Sigmoid colon (tissue), 7 donors: ENCODE measurements at regions of chr10 and their contacts with region 1.

Region 1: DNA sequence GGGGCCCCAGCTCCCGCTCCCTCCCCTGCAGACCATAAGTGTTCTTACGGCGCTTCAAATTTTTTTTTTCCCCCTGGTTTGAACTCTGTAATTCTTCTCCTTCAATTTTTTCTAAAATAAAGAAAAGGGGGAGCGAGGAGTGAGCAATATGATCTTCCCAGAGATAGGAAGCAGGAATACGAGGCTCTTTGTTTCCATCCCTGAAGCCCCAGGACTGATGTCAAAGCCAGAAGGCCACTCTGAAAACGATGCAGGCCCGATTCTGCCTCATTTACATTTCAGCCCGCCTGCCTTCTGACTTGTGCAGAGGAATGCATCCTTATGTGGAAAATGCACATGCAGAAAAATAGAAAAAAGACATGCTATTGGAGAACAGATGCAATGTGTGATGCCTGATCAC is 401.5 kb upstream of the MKI67 start:
- DNase-seq: no peak
- H3K4me3 ChIP-seq: no peak overlapping the region
- H3K27ac ChIP-seq: no peak overlapping the region
- H3K4me1 ChIP-seq: peaks cover 0 to 4% (median 0%) of the 10 kb centered on the region in 4 donors
- H3K27me3 ChIP-seq: no peaks in the 10 kb centered on the region
- CTCF ChIP-seq: no peak
- EP300 ChIP-seq: no peak
- POLR2A ChIP-seq: no peak

Region 2: GRCh38 chr10:128203028-128203427 is 324.7 kb before region 1 on chr10:
- intact Hi-C with region 1: no loop called
- DNase-seq: no peak
- H3K4me3 ChIP-seq: no peak overlapping the region
- H3K27ac ChIP-seq: no peak overlapping the region
- H3K4me1 ChIP-seq: no peaks in the 10 kb centered on the region
- H3K27me3 ChIP-seq: peaks cover 0 to 8% (median 0%) of the 10 kb centered on the region in 3 donors
- CTCF ChIP-seq: no peak
- EP300 ChIP-seq: no peak
- POLR2A ChIP-seq: no peak

Region 3: GRCh38 chr10:128324077-128324827 is 203.5 kb before region 1 on chr10:
- intact Hi-C with region 1: loop called (anchors 2 kb)
- DNase-seq: no peak
- H3K4me3 ChIP-seq: no peak overlapping the region
- H3K27ac ChIP-seq: no peak overlapping the region
- H3K4me1 ChIP-seq: peaks cover 0 to 6% (median 0%) of the 10 kb centered on the region in 4 donors
- H3K27me3 ChIP-seq: peaks cover 0 to 6% (median 0%) of the 10 kb centered on the region in 3 donors
- CTCF ChIP-seq: peak in 2 of 4 experiments; percentile 29 to 48
- EP300 ChIP-seq: no peak
- POLR2A ChIP-seq: no peak